ENCODE measurements at regions of chrX and their contacts with region 1.

Region 1: GRCh38 chrX:153061732-153062131 is 5.5 kb downstream of the PNMA3 start:
- DNase-seq: no peak
- ATAC-seq: no peak
- H3K4me3 ChIP-seq: no peak overlapping the region
- H3K4me3 Mint-ChIP-seq: no peak overlapping the region
- H3K27ac ChIP-seq: no peak overlapping the region
- H3K27ac Mint-ChIP-seq: no peak overlapping the region
- H3K4me1 ChIP-seq: no peaks in the 10 kb centered on the region
- H3K4me1 Mint-ChIP-seq: peaks cover 0 to 3% (median 0%) of the 10 kb centered on the region in 7 donors
- H3K27me3 ChIP-seq: no peaks in the 10 kb centered on the region
- H3K27me3 Mint-ChIP-seq: peaks cover 0 to 4% (median 0%) of the 10 kb centered on the region in 5 donors

Region 2: GRCh38 chrX:152926279-152926678 is 135.5 kb before region 1 on chrX:
- CTCF ChIA-PET with region 1: no interaction called
- POLR2A ChIA-PET with region 1: no interaction called
- intact Hi-C with region 1: no loop called
- DNase-seq: peak in 7 of 9 donors; percentile 5 to 36 (median 27)
- ATAC-seq: peak; percentile 77
- H3K4me3 ChIP-seq: no peak overlapping the region
- H3K4me3 Mint-ChIP-seq: no peak overlapping the region
- H3K27ac ChIP-seq: no peak overlapping the region
- H3K27ac Mint-ChIP-seq: no peak overlapping the region
- H3K4me1 ChIP-seq: no peaks in the 10 kb centered on the region
- H3K4me1 Mint-ChIP-seq: peaks cover 0 to 17% (median 9%) of the 10 kb centered on the region in 7 donors
- H3K27me3 ChIP-seq: no peaks in the 10 kb centered on the region
- H3K27me3 Mint-ChIP-seq: no peaks in the 10 kb centered on the region

Region 3: DNA sequence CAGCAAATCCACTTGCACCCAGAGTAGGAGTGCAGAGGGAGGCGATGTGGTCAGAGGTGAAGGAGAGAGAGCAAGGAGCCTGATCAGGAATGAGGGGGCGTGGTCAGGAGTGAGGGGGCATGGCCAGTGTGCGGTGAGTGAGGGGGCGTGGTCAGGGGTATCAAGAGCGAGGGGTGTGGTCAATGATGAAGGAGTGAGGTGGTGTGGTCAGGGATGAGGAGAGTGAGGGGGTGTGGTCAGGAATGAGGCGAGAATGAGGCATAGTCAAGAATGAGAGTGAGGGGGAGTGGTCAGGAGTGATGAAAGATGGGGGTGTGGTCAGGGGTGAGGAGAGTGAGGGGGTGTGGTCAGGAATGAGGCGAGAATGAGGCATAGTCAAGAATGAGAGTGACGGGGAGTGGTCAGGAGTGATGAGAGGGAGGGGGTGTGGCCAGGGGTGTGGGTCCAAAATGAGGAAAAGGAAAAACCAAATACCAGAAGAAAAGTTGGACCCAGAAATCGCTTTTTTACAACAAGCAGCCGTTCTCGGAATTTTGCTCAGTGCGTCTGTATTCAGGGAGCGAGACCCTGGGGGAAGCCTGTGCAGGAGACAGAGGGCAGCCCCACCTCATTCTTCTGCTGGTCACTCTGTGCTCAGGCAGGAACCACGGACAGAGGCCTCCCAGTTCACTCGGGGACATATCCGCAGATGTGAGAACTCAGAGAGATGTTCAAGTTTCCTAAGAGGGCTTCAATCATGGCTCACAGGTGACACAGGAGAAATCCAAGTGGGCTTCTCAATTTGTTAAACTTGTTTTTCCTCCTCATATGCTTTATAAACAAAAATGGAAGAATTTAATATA is 164.8 kb after region 1 on chrX:
- CTCF ChIA-PET with region 1: no interaction called
- POLR2A ChIA-PET with region 1: no interaction called
- intact Hi-C with region 1: no loop called
- DNase-seq: no peak
- ATAC-seq: peak; percentile 72
- H3K4me3 ChIP-seq: no peak overlapping the region
- H3K4me3 Mint-ChIP-seq: peak overlapping the region in 1 of 10 donors; percentile 23
- H3K27ac ChIP-seq: no peak overlapping the region
- H3K27ac Mint-ChIP-seq: no peak overlapping the region
- H3K4me1 ChIP-seq: no peaks in the 10 kb centered on the region
- H3K4me1 Mint-ChIP-seq: no peaks in the 10 kb centered on the region
- H3K27me3 ChIP-seq: peaks cover 0 to 2% of the 10 kb centered on the region in 2 donors
- H3K27me3 Mint-ChIP-seq: peaks cover 7 to 23% (median 12%) of the 10 kb centered on the region in 5 donors

Region 4: GRCh38 chrX:153319295-153320046 is 257.7 kb after region 1 on chrX:
- CTCF ChIA-PET with region 1: no interaction called
- POLR2A ChIA-PET with region 1: no interaction called
- intact Hi-C with region 1: loop called in 1 of 2 experiments (anchors 5 kb)
- DNase-seq: no peak
- ATAC-seq: no peak
- H3K4me3 ChIP-seq: no peak overlapping the region
- H3K4me3 Mint-ChIP-seq: no peak overlapping the region
- H3K27ac ChIP-seq: no peak overlapping the region
- H3K27ac Mint-ChIP-seq: no peak overlapping the region
- H3K4me1 ChIP-seq: peaks cover 0 to 7% of the 10 kb centered on the region in 2 donors
- H3K4me1 Mint-ChIP-seq: peaks cover 0 to 10% (median 8%) of the 10 kb centered on the region in 7 donors
- H3K27me3 ChIP-seq: no peaks in the 10 kb centered on the region
- H3K27me3 Mint-ChIP-seq: peaks cover 0 to 26% (median 0%) of the 10 kb centered on the region in 5 donors